Endothelial cell of umbilical vein (primary cell): ENCODE measurements at regions of chr15 and their contacts with region 1.

Region 1: GRCh38 chr15:81000624-81001151 is at the start of gene TLNRD1:
- DNase-seq: peak; percentile 92
- H3K4me3 ChIP-seq: peak within 1 kb of the TSS; percentile 73 to 87 (median 75)
- H3K27ac ChIP-seq: peak within 1 kb of the TSS; percentile 85
- H3K4me1 ChIP-seq: peaks cover 35% of the 10 kb centered on the region
- H3K27me3 ChIP-seq: no peaks in the 10 kb centered on the region
- CTCF ChIP-seq: no peak
- POLR2A ChIP-seq: peak; percentile 91
- total RNA-seq, gene TLNRD1: 33.0 and 33.2 TPM in 2 replicates

Region 2: DNA sequence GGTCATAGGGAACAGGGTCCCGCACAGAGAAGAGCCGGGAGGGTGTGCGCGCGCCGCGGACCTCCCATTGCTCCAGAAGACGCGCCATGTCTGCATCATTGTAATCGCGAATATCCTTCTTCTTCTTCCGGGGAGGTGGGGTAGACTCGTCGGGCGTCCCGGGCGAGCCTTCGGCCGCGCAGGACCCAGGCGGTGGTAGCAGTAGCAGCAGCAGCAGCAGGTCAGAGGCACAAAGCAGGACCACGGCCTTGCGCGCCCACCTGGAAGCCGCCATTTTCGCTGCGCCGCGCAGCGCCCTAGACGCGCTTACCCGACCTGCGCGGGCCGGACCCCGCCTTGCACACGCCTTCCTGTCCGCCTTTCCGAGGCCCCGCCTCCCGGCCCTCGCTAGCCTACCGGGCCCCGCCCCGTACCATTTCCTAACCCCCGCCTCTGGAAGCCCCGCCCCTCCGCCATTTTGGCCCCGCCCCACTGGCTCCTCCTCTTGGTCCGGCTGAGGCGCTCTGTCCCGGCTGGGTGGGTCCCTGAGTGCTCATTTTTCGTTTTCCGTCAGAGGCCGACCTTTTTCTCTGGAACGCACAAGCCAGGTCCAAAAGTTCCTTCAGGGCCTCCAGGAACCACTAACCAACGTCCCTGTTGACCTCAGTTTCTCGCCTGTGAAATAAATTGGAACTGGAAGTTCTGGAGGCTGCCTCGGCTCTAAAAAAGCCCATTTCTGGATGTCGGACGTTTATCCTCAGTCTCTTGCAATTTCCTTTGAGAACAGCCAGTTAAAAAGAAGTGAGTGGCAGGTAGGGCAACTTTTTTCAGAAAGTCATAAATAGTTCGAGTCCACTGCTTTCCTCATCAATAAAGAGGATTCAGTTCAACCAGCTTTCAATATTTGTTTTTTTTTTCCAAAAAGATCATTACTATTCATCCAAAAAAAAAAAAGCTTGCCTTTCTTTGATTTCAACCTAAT is 10.9 kb before region 1 on chr15 and contains the start of gene MESD:
- CTCF ChIA-PET with region 1: interaction called, 10 read pairs
- POLR2A ChIA-PET with region 1: interaction called, 16 read pairs
- dilution Hi-C with region 1: no loop called
- intact Hi-C with region 1: loop called (anchors 1 kb)
- DNase-seq: peak; percentile 96
- H3K4me3 ChIP-seq: peak within 1 kb of the TSS; percentile 61 to 86 (median 77)
- H3K27ac ChIP-seq: peak within 1 kb of the TSS; percentile 75
- H3K4me1 ChIP-seq: peaks cover 18% of the 10 kb centered on the region
- H3K27me3 ChIP-seq: no peaks in the 10 kb centered on the region
- CTCF ChIP-seq: no peak
- POLR2A ChIP-seq: peak; percentile 95
- total RNA-seq, gene MESD: 30.5 and 32.9 TPM in 2 replicates

Region 3: DNA sequence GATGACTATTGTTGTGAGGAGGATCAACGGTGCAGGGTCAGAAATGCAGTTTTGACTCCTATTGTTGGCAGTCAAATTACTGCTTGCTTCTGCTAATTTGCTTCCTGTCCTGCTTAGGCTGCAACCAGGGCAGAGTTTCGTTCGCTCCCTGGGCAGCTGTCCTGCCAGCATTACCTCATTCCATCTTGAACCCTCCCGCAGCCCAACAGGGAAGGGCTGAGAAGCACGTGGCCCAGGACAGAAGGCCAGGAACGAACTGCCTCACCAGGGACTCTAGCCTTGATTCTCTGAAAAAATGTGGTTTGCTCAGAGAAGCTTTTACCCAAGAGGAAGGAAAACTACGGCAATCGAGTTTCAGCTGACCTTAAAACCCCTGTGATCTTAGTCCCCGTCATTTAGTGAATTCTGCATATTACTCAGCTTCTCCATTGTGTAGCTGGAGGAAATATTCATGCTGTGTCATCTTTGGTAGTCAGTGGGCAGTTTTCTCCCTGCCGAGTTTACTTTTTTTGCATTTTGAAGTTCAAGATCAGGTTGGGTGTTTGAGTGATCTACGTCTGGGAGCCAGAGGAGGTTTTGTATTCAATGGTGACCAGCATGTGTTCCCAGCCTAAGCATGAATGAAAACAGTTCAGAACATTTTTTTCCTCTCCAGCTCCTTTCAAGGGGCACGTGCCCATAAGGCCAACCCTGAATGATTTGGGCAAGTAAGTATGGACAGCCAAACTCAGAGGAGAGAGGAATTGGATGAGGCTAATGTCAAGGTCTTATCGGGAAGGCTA is 23.0 kb after region 1 on chr15:
- CTCF ChIA-PET with region 1: interaction called, 12 read pairs
- POLR2A ChIA-PET with region 1: interaction called, 5 read pairs
- dilution Hi-C with region 1: no loop called
- intact Hi-C with region 1: loop called (anchors 1 kb)
- DNase-seq: peak; percentile 91
- H3K4me3 ChIP-seq: no peak overlapping the region
- H3K27ac ChIP-seq: peak overlapping the region; percentile 97
- H3K4me1 ChIP-seq: peaks cover 23% of the 10 kb centered on the region
- H3K27me3 ChIP-seq: no peaks in the 10 kb centered on the region
- CTCF ChIP-seq: no peak
- POLR2A ChIP-seq: no peak

Region 4: DNA sequence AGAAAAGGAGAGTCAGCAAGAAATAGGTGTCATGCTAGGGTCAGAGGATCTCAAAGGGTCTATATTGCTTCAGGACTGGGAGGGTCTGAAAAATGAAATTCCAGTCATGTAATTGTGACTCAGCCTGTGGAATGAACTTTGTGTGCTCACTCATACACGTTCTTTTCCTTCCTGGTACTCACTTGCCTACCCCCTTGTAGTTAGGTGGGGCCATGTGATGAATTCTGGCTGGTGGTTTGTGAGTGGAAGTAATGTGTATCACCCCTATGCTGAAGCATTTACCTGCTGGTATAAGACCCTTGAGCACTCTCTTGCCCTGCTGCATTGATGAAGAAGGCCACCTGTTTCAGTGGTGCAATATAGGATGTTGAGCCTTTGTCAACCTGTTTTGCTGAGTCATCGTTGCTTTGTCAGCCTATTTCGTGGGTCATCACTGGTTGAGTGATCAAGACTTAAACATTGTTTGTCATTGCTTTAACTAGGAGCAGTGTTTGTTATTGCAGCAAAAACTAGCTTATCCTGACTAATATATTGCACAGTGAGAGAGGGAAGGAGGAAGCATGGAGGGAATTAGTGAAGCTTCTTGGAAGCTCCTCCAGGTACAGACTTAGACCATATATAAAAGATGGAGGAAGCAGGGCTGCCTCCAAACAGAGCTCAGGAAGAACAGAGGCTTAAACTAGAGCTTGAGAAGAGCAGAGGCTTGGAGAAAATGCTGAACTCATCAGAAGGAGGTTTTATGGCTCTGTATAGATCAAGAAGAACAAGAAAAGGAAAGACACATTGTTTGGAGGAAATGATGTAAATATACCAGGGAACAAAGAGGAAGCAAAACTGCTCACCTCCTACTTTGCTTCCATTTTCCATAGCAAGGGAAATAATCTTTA is 29.0 kb after region 1 on chr15:
- CTCF ChIA-PET with region 1: interaction called, 3 read pairs
- POLR2A ChIA-PET with region 1: no interaction called
- dilution Hi-C with region 1: no loop called
- intact Hi-C with region 1: loop called (anchors 1 kb)
- DNase-seq: peak; percentile 65
- H3K4me3 ChIP-seq: no peak overlapping the region
- H3K27ac ChIP-seq: peak overlapping the region; percentile 9
- H3K4me1 ChIP-seq: peaks cover 32% of the 10 kb centered on the region
- H3K27me3 ChIP-seq: no peaks in the 10 kb centered on the region
- CTCF ChIP-seq: no peak
- POLR2A ChIP-seq: no peak

Region 5: GRCh38 chr15:81038975-81039607 is 38.4 kb after region 1 on chr15:
- CTCF ChIA-PET with region 1: no interaction called
- POLR2A ChIA-PET with region 1: interaction called, 3 read pairs
- dilution Hi-C with region 1: no loop called
- intact Hi-C with region 1: loop called (anchors 1 kb)
- DNase-seq: peak; percentile 87
- H3K4me3 ChIP-seq: no peak overlapping the region
- H3K27ac ChIP-seq: peak overlapping the region; percentile 76
- H3K4me1 ChIP-seq: peaks cover 22% of the 10 kb centered on the region
- H3K27me3 ChIP-seq: no peaks in the 10 kb centered on the region
- CTCF ChIP-seq: no peak
- POLR2A ChIP-seq: peak; percentile 31

Region 6: GRCh38 chr15:81071120-81071519 is 70.4 kb after region 1 on chr15:
- CTCF ChIA-PET with region 1: interaction called, 3 read pairs
- POLR2A ChIA-PET with region 1: interaction called, 3 read pairs
- dilution Hi-C with region 1: no loop called
- intact Hi-C with region 1: loop called (anchors 1 kb)
- DNase-seq: peak; percentile 85
- H3K4me3 ChIP-seq: no peak overlapping the region
- H3K27ac ChIP-seq: no peak overlapping the region
- H3K4me1 ChIP-seq: peaks cover 16% of the 10 kb centered on the region
- H3K27me3 ChIP-seq: no peaks in the 10 kb centered on the region
- CTCF ChIP-seq: no peak
- POLR2A ChIP-seq: no peak

Region 7: DNA sequence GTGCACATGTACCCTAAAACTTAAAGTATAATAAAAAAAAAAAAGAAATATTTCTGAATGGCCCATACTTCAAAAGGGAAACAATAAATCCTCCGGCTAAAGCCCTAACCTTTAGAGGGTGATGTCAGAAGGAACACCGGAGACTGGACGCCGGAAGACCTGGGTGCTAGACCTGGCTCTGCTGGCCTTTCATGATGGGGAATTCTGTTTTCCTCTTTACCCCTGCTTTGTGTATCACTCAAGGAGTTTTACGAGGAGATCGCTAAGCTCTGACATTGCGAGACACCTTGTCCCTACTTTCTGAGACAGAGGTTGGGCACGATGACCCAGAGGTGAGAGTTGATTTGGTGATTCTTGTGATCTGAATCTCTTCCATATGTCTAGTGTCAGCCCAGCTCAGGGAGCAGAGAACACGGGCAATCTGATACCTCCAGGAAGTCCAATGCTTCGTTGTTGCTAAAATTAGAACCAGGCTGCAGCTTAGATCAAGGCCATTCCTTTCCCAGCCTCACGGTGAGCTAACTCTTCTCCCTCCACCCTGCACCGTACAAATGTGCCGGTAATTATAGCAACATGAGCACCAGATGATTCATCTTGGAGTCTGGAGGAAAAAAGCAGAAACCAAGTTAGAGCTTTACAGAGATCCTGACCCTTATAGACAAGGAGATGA is 91.3 kb after region 1 on chr15:
- CTCF ChIA-PET with region 1: interaction called, 14 read pairs
- POLR2A ChIA-PET with region 1: interaction called, 7 read pairs
- dilution Hi-C with region 1: no loop called
- intact Hi-C with region 1: loop called (anchors 1 kb)
- DNase-seq: peak; percentile 95
- H3K4me3 ChIP-seq: peak overlapping the region in 1 of 3 experiments; percentile 16
- H3K27ac ChIP-seq: peak overlapping the region; percentile 51
- H3K4me1 ChIP-seq: peaks cover 14% of the 10 kb centered on the region
- H3K27me3 ChIP-seq: no peaks in the 10 kb centered on the region
- CTCF ChIP-seq: no peak
- POLR2A ChIP-seq: no peak

Region 8: GRCh38 chr15:81216422-81216821 is 215.7 kb after region 1 on chr15:
- CTCF ChIA-PET with region 1: no interaction called
- POLR2A ChIA-PET with region 1: no interaction called
- dilution Hi-C with region 1: no loop called
- intact Hi-C with region 1: no loop called
- DNase-seq: no peak
- H3K4me3 ChIP-seq: no peak overlapping the region
- H3K27ac ChIP-seq: no peak overlapping the region
- H3K4me1 ChIP-seq: no peaks in the 10 kb centered on the region
- H3K27me3 ChIP-seq: no peaks in the 10 kb centered on the region
- CTCF ChIP-seq: no peak
- POLR2A ChIP-seq: no peak